GM10248 (cell line): ENCODE measurements at regions of chr17 and their contacts with region 1.

Region 1: GRCh38 chr17:52395308-52395707 is 236.8 kb upstream of the CA10 start:
- DNase-seq: no peak
- CTCF ChIP-seq: no peak

Region 2: DNA sequence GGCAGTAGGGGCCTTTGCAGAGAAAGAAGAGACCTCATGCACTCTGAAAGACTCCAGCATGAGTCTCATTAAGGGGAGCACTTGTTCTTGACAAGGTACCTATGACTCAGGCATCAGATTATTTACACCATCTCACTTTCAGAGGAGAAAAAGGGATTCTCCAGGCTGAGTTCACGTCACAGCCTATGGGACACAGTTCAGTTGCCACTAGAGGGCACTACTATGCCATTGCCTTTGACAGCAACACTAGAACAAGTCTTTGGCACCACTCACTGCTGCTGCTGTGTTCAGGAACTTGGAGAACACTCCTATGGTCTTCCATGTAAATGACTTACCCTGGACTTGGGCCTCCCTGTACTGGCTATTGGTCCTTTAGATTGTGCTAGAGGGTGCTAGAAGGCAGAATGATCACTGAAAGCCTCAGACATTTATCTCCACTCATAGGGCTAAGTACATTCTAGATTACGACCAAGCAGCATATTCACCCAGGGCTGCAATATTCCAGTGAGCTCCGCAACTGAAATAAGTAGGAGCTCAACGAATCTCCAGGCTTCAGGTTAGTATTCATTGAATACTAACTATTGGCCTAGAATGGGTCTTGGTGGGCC is 11.7 kb before region 1 on chr17:
- CTCF ChIA-PET with region 1: interaction called, 18 read pairs
- POLR2A ChIA-PET with region 1: no interaction called
- DNase-seq: peak; percentile 9
- CTCF ChIP-seq: peak; percentile 56